G401 (cell line): ENCODE measurements at regions of chr1 and their contacts with region 1.

Region 1: GRCh38 chr1:151098126-151098525 is 27.6 kb downstream of the GABPB2 start:
- DNase-seq: no peak

Region 2: GRCh38 chr1:151047346-151047924 is 50.7 kb before region 1 on chr1 and contains the start of gene C1orf56:
- in situ Hi-C with region 1: no loop called
- DNase-seq: peak; percentile 81
- total RNA-seq, gene C1orf56: 0.07 TPM in 1 of 2 replicates, not detected in the other

Region 3: GRCh38 chr1:151267760-151268159 is 169.6 kb after region 1 on chr1:
- in situ Hi-C with region 1: loop called (anchors 10 kb)
- DNase-seq: no peak